IMR-90 (cell line): ENCODE measurements at regions of chr19 and their contacts with region 1.

Region 1: DNA sequence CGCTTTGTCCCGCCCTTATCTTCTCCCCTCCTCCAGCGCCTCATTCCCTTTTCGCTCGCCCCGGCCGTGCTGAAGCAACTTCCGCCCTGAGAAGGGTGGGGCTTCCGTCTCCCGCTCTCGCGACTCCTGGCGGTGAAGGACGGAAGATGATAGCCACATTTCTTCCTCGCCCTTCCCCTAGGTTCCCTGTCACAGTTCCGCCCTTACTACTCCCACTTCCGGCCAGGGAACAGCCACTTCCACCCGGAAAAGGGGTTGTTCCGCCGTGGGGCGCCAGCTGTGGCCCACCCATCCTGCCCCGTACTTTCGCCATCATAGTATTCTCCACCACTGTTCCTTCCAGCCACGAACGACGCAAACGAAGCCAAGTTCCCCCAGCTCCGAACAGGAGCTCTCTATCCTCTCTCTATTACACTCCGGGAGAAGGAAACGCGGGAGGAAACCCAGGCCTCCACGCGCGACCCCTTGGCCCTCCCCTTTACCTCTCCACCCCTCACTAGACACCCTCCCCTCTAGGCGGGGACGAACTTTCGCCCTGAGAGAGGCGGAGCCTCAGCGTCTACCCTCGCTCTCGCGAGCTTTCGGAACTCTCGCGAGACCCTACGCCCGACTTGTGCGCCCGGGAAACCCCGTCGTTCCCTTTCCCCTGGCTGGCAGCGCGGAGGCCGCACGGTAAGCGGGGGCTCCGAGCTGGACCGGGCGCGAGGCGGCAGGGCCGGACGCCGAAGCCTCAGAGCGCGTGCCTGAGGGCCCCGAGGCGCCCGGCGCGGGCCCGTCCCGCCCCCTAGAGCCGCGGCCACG is at the start of gene RPS19:
- DNase-seq: peak; percentile 98
- ATAC-seq: peak; percentile 91
- H3K4me3 ChIP-seq: peak within 1 kb of the TSS; percentile 62
- H3K27ac ChIP-seq: peak within 1 kb of the TSS; percentile 99
- H3K4me1 ChIP-seq: peaks cover 10% of the 10 kb centered on the region
- H3K27me3 ChIP-seq: peaks cover 4% of the 10 kb centered on the region; the same call in 1 of the 2 replicates
- CTCF ChIP-seq: peak; percentile 58
- POLR2A ChIP-seq: peak; percentile 98
- RAD21 ChIP-seq: no peak
- total RNA-seq, gene RPS19: 230 and 299 TPM in 2 replicates

Region 2: GRCh38 chr19:41785653-41786052 is 74.2 kb before region 1 on chr19:
- CTCF ChIA-PET with region 1: no interaction called
- POLR2A ChIA-PET with region 1: no interaction called
- dilution Hi-C with region 1: no loop called
- in situ Hi-C with region 1: no loop called
- intact Hi-C with region 1: no loop called
- DNase-seq: peak; percentile 65
- ATAC-seq: peak; percentile 93
- H3K4me3 ChIP-seq: no peak overlapping the region
- H3K27ac ChIP-seq: no peak overlapping the region
- H3K4me1 ChIP-seq: no peaks in the 10 kb centered on the region
- H3K27me3 ChIP-seq: peaks cover 5% of the 10 kb centered on the region
- CTCF ChIP-seq: peak; percentile 61
- POLR2A ChIP-seq: no peak
- RAD21 ChIP-seq: peak; percentile 45

Region 3: DNA sequence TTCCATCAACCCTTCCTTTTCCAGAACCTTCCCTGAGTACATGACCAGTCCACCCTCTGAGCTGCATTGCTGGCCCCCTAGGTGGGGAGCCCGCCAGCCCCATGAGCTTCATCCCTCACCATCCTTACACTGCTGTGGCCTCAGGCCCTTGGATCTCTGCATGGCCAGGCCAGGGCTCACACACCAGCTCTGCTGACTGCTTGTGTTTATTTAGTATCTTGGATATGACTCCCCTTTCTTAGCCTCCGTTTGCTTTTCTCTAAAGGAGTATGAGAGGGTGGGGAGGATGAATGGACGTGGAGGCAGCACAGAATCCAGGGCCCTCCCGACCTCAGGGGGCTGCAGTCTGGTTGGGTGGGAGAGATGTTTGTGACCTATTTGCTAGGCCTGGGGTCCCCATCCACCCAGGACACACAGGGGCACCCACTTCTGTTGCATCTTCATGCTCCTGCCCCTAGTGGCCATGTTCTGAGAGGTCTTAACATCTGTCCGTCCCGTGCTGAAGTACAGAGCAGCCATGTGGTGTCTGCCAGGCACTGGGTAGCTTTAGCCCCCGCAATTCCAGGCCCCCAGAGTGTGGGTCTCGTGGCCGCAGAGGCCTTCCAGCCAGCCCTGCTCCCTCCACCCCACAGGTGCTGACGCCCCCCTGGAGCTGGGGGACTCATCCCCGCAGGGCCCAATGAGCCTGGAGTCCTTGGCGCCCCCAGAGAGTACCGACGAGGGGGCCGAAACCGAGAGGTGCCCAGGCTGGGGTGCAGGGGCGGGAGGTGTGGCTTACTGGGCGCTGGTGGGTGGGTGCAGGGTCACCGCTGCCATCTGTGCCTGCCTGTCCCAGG is 36.1 kb after region 1 on chr19:
- CTCF ChIA-PET with region 1: no interaction called
- POLR2A ChIA-PET with region 1: no interaction called
- dilution Hi-C with region 1: no loop called
- in situ Hi-C with region 1: no loop called
- intact Hi-C with region 1: no loop called
- DNase-seq: no peak
- ATAC-seq: peak; percentile 41; the same call in 1 of the 2 replicates
- H3K4me3 ChIP-seq: no peak overlapping the region
- H3K27ac ChIP-seq: no peak overlapping the region
- H3K4me1 ChIP-seq: no peaks in the 10 kb centered on the region
- H3K27me3 ChIP-seq: no peaks in the 10 kb centered on the region
- CTCF ChIP-seq: 0 out of 2 replicates have a peak, but pooled peaks have one; percentile 7
- POLR2A ChIP-seq: no peak
- RAD21 ChIP-seq: no peak

Region 4: DNA sequence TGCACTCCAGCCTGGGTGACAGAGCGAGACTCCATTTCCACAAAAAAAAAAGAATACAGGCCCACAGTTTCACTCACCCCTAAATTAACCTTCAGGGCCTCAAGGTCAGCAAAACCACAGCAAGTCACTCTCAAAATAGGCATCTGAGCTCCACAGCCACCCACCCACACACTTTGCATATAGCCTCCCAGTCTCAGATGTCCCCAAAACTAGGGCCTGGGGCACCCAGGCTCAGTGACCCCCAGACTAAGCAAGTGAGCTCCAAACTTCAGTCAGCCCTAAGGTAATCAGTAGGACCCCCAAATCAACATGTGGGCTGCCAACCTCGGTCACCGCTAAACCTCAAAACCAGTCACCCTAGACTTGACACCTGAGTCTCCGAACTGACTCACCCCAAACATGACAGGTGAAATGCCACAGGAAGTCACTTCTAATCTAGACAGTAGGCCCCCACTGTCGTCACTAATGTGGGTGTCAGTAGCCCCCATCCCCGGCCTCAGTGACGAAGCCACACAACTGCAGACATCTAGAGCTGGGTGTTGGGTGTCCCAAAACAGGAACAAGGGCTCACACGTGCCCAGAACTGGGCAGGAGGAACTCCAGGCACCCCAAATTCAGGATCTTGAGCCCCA is 85.4 kb after region 1 on chr19:
- CTCF ChIA-PET with region 1: no interaction called
- POLR2A ChIA-PET with region 1: interaction called, 15 read pairs
- dilution Hi-C with region 1: no loop called
- in situ Hi-C with region 1: no loop called
- intact Hi-C with region 1: no loop called
- DNase-seq: no peak
- ATAC-seq: no peak
- H3K4me3 ChIP-seq: no peak overlapping the region
- H3K27ac ChIP-seq: no peak overlapping the region
- H3K4me1 ChIP-seq: no peaks in the 10 kb centered on the region
- H3K27me3 ChIP-seq: peaks cover 8% of the 10 kb centered on the region
- CTCF ChIP-seq: no peak
- POLR2A ChIP-seq: no peak
- RAD21 ChIP-seq: no peak

Region 5: DNA sequence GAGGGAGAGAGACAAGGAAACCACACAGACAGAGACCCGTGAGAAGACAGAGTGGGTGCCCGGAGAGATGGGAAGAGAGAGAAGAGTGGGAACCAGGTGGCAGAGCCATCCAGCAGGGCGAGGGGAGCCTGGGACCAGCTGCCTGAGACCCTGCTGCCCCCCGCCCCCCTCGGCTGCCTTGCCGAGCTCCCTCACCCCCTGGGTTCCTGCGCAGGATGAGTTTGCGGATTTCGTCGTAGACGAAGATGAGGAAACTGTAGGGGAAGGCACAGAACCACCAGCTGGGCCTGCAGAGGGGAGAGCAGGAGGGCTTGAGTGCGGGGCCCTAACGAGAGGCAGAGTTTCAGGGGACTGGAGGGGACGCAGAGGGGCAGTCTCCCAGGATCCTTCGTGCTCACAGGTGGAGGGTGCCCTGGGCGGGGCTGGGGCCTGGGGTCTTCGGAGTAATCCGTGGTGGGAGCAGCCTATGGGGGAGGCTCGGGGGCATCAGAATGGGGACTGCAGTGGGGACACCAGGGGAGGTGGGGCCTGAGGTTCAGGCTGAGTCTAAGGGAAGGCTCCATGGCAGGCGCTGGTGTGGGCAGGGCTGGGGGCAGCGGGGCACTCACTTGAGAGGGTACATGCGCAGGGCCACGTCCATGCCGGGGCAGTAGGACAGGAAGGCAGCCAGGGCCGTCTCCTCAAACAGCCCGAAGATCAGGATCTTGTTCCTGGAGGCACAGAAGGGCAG is 107.4 kb after region 1 on chr19:
- CTCF ChIA-PET with region 1: no interaction called
- POLR2A ChIA-PET with region 1: interaction called, 17 read pairs
- dilution Hi-C with region 1: no loop called
- in situ Hi-C with region 1: no loop called
- intact Hi-C with region 1: no loop called
- DNase-seq: no peak
- ATAC-seq: no peak
- H3K4me3 ChIP-seq: no peak overlapping the region
- H3K27ac ChIP-seq: no peak overlapping the region
- H3K4me1 ChIP-seq: no peaks in the 10 kb centered on the region
- H3K27me3 ChIP-seq: peaks cover 25% of the 10 kb centered on the region
- CTCF ChIP-seq: no peak
- POLR2A ChIP-seq: no peak
- RAD21 ChIP-seq: no peak

Region 6: DNA sequence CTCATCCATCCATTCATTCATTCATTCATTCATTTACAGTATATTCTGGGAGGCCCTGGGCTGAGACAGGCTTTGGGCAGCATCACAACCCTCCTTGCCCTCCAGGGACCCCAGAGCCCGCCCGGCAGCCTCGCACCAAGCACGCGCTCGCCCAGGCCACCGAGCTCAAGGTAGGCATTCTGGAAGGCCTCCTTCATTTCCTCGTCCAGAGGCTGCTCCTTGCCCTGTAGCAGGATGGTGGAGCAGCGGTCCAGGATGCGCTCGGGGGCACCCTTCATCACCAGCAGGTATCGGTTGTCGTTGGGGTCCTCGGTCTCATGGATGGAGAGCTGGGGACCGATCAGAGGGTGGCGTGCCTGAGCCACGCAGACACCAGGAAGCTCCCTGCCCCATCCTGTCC is 118.7 kb after region 1 on chr19:
- CTCF ChIA-PET with region 1: no interaction called
- POLR2A ChIA-PET with region 1: no interaction called
- dilution Hi-C with region 1: no loop called
- in situ Hi-C with region 1: no loop called
- intact Hi-C with region 1: no loop called
- DNase-seq: no peak
- ATAC-seq: no peak
- H3K4me3 ChIP-seq: no peak overlapping the region
- H3K27ac ChIP-seq: no peak overlapping the region
- H3K4me1 ChIP-seq: no peaks in the 10 kb centered on the region
- H3K27me3 ChIP-seq: peaks cover 28% of the 10 kb centered on the region
- CTCF ChIP-seq: no peak
- POLR2A ChIP-seq: no peak
- RAD21 ChIP-seq: no peak